ENCODE measurements at regions of chr13 and their contacts with region 1.

Region 1: DNA sequence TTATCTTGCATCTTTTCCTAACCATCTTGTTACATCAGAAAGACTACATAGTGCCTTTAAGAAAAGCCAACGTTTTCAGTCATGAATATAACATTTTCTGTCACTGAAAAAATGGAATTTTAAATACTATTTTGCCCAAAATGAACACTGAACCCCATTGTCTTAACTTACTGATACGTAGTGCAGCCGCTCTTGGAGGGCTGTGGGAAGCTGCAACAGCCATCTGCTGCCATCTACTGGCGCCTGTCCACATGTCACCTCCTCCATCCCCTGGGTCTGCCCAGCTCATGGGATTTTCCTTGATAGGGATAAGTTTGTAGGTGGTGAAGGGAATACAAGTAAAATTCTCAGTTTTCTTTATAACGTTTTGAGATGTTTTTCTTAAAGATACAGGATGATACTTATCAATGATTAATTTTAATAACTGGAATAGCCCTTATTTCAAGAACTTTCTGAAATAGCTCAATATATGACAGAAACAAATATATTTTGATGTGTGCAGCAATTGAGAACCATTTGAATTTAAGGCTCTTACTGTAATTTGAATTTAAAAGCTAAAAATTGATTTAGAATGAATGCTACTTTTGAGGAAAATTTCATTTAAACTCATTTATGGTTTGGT is 73.7 kb downstream of the GGACT start:
- DNase-seq: peak; percentile 53 to 71 (median 67)
- H3K4me3 ChIP-seq: no peak overlapping the region
- H3K4me3 Mint-ChIP-seq: no peak overlapping the region
- H3K27ac ChIP-seq: no peak overlapping the region
- H3K27ac Mint-ChIP-seq: no peak overlapping the region
- H3K4me1 ChIP-seq: peaks cover 12 to 20% of the 10 kb centered on the region in 2 donors
- H3K4me1 Mint-ChIP-seq: peaks cover 36% of the 10 kb centered on the region
- H3K27me3 ChIP-seq: peaks cover 5% of the 10 kb centered on the region in 2 donors
- H3K27me3 Mint-ChIP-seq: peaks cover 3 to 10% (median 6%) of the 10 kb centered on the region in 3 donors
- CTCF ChIP-seq: peak; percentile 98

Region 2: DNA sequence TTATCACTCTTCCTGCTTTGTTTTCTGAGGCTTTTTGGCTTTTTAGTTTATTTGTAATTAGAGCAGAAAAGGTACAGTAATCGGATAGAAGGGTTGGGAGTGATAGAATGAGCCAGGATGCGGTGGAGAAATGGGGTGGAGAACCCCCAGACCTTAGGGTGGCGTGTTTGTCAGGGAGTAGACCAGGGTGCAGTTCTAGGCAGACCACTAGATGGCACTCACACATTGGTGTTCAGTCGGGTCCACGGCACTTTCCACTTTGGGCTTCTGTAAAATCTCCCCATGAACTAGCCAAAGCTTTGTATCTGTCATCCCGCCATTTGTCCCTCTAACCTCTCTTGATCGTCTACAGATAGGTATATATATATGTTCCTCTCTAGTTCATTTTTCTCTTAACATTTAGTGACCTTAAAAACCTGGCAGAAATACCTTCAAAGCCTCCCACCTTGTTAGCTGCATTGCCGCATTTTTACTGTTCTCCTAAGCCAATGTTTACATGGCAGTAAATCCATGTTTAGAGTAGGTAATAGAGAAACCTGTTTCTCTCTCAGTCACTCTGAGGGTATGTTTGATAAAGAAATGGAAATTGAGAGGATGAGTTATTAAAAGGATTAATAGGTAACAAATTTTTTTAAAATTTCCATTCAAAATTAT is 858.7 kb before region 1 on chr13:
- intact Hi-C with region 1: loop called (anchors 10 kb)
- DNase-seq: peak; percentile 32 to 59 (median 56)
- H3K4me3 ChIP-seq: no peak overlapping the region
- H3K4me3 Mint-ChIP-seq: peak overlapping the region in 1 of 2 donors; percentile 75
- H3K27ac ChIP-seq: no peak overlapping the region
- H3K27ac Mint-ChIP-seq: no peak overlapping the region
- H3K4me1 ChIP-seq: peaks cover 9 to 12% of the 10 kb centered on the region in 2 donors
- H3K4me1 Mint-ChIP-seq: peaks cover 20% of the 10 kb centered on the region
- H3K27me3 ChIP-seq: peaks cover 35 to 48% of the 10 kb centered on the region in 2 donors
- H3K27me3 Mint-ChIP-seq: peaks cover 40 to 48% (median 44%) of the 10 kb centered on the region in 3 donors
- CTCF ChIP-seq: peak; percentile 90

Region 3: DNA sequence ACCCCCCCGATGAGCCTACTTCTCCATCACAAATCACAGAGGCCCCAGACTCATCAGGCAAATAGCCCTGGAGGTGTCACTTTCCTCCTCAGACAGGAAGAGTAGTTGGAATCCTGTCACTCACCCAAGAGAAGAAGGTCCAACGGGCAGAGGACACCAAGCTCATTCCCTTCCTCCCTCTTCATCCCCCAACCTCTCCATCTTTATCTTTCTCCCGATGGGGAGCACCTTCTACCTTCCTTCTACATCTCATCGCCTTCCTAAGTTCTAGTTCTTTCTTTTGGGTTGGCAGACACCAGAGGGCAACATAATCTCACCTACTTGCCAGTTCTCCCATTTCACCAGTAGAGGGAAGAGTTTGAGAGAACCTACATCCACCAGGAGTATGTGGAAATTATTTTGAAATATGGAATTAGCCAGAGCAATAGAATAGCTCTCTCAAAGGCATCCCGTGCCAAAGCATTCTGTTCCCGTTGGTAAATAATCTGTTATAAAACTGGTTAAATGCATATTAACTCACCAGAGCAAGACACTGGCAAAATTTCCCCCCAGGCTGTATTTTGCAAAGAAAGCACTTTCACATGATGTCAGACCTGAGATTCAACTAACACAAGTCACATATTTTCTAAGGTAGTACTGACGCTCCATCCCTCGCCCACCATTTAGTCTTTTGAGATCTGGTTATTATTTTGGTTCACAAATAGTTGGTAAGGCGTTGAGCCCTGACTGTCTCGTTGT is 598.4 kb before region 1 on chr13:
- intact Hi-C with region 1: loop called (anchors 2 to 5 kb)
- DNase-seq: peak; percentile 19 to 42 (median 23)
- H3K4me3 ChIP-seq: no peak overlapping the region
- H3K4me3 Mint-ChIP-seq: no peak overlapping the region
- H3K27ac ChIP-seq: no peak overlapping the region
- H3K27ac Mint-ChIP-seq: no peak overlapping the region
- H3K4me1 ChIP-seq: no peaks in the 10 kb centered on the region
- H3K4me1 Mint-ChIP-seq: peaks cover 2% of the 10 kb centered on the region
- H3K27me3 ChIP-seq: peaks cover 0 to 9% of the 10 kb centered on the region in 2 donors
- H3K27me3 Mint-ChIP-seq: peaks cover 30 to 55% (median 34%) of the 10 kb centered on the region in 3 donors
- CTCF ChIP-seq: peak; percentile 91

Region 4: GRCh38 chr13:100423375-100423774 is 91.5 kb before region 1 on chr13:
- intact Hi-C with region 1: loop called in 1 of 2 experiments (anchors 10 kb)
- DNase-seq: peak; percentile 71 to 92 (median 81)
- H3K4me3 ChIP-seq: peak overlapping the region in 1 of 3 experiments; percentile 10
- H3K4me3 Mint-ChIP-seq: peak overlapping the region in 1 of 2 donors; percentile 14
- H3K27ac ChIP-seq: peak overlapping the region; percentile 22 to 76
- H3K27ac Mint-ChIP-seq: peak overlapping the region; percentile 74 to 89 (median 87)
- H3K4me1 ChIP-seq: peaks cover 13 to 17% of the 10 kb centered on the region in 2 donors
- H3K4me1 Mint-ChIP-seq: peaks cover 19% of the 10 kb centered on the region
- H3K27me3 ChIP-seq: no peaks in the 10 kb centered on the region
- H3K27me3 Mint-ChIP-seq: no peaks in the 10 kb centered on the region
- CTCF ChIP-seq: no peak

Region 5: GRCh38 chr13:100473087-100473486 is 41.8 kb before region 1 on chr13:
- intact Hi-C with region 1: no loop called
- DNase-seq: no peak
- H3K4me3 ChIP-seq: no peak overlapping the region
- H3K4me3 Mint-ChIP-seq: no peak overlapping the region
- H3K27ac ChIP-seq: no peak overlapping the region
- H3K27ac Mint-ChIP-seq: no peak overlapping the region
- H3K4me1 ChIP-seq: no peaks in the 10 kb centered on the region
- H3K4me1 Mint-ChIP-seq: no peaks in the 10 kb centered on the region
- H3K27me3 ChIP-seq: no peaks in the 10 kb centered on the region
- H3K27me3 Mint-ChIP-seq: peaks cover 0 to 5% (median 2%) of the 10 kb centered on the region in 3 donors
- CTCF ChIP-seq: no peak

Region 6: DNA sequence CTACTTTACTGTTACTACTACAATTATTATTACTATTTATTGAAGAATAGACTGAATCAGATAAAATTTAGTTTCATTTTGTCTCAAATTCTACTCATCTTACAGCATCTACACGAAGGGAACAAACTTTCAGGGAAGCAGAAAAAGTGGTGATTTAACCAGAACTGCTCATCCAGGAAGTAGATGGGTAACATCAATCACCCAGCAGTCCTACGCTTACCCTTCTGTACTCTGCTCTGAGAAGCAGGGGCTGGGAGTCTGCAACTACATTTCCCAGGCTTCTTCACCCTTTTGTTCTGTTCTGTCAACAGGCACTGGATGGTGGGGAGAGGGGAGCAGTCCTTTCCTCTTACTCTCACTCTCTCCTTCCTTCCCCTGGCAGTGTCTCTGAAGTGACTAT is 105.0 kb after region 1 on chr13:
- intact Hi-C with region 1: no loop called
- DNase-seq: no peak
- H3K4me3 ChIP-seq: no peak overlapping the region
- H3K4me3 Mint-ChIP-seq: no peak overlapping the region
- H3K27ac ChIP-seq: no peak overlapping the region
- H3K27ac Mint-ChIP-seq: peak overlapping the region in 1 of 7 donors; percentile 37
- H3K4me1 ChIP-seq: no peaks in the 10 kb centered on the region
- H3K4me1 Mint-ChIP-seq: no peaks in the 10 kb centered on the region
- H3K27me3 ChIP-seq: no peaks in the 10 kb centered on the region
- H3K27me3 Mint-ChIP-seq: no peaks in the 10 kb centered on the region
- CTCF ChIP-seq: no peak

Measured in CD14-positive monocyte (primary cell).